Vagina (tissue), 2 donors: ENCODE measurements at regions of chr7 and their contacts with region 1.

Region 1: GRCh38 chr7:91034459-91035368 is 229.5 kb upstream of the FZD1 start:
- DNase-seq: no peak
- H3K4me3 ChIP-seq: no peak overlapping the region
- H3K27ac ChIP-seq: no peak overlapping the region
- H3K4me1 ChIP-seq: no peaks in the 10 kb centered on the region
- H3K27me3 ChIP-seq: no peaks in the 10 kb centered on the region
- CTCF ChIP-seq: peak; percentile 20 to 44 (median 33)
- POLR2A ChIP-seq: no peak

Region 2: GRCh38 chr7:90552521-90552920 is 482.2 kb before region 1 on chr7:
- intact Hi-C with region 1: loop called (anchors 10 kb)
- DNase-seq: no peak
- H3K4me3 ChIP-seq: no peak overlapping the region
- H3K27ac ChIP-seq: no peak overlapping the region
- H3K4me1 ChIP-seq: no peaks in the 10 kb centered on the region
- H3K27me3 ChIP-seq: no peaks in the 10 kb centered on the region
- CTCF ChIP-seq: no peak
- POLR2A ChIP-seq: no peak

Region 3: GRCh38 chr7:90988516-90988915 is 46.2 kb before region 1 on chr7:
- intact Hi-C with region 1: no loop called
- DNase-seq: no peak
- H3K4me3 ChIP-seq: no peak overlapping the region
- H3K27ac ChIP-seq: no peak overlapping the region
- H3K4me1 ChIP-seq: no peaks in the 10 kb centered on the region
- H3K27me3 ChIP-seq: no peaks in the 10 kb centered on the region
- CTCF ChIP-seq: no peak
- POLR2A ChIP-seq: no peak